Activated T-helper 2 cell treated with anti-CD3 and anti-CD28 coated beads, Interferon-gamma antibody, Interleukin-2, Interleukin-4, amounts not matched to agents 10 μg/mL and 5 μg/mL and 100 μg/mL, durations not matched to agents 14 hours and 24 hours and 36 hours (primary cell): ENCODE measurements at regions of chr19 and their contacts with region 1.

Region 1: GRCh38 chr19:50329146-50329925 is at the start of gene KCNC3:
- DNase-seq: peak; percentile 97
- H3K4me3 Mint-ChIP-seq: peak within 1 kb of the TSS; percentile 91
- H3K27ac Mint-ChIP-seq: peak within 1 kb of the TSS; percentile 95
- H3K4me1 Mint-ChIP-seq: peaks cover 59% of the 10 kb centered on the region
- H3K27me3 Mint-ChIP-seq: peaks cover 15% of the 10 kb centered on the region
- total RNA-seq, gene KCNC3: 17.6 and 19.2 TPM in 2 replicates

Region 2: GRCh38 chr19:49929611-49930482 is 399.5 kb before region 1 on chr19:
- intact Hi-C with region 1: loop called (anchors 2 kb)
- DNase-seq: peak; percentile 92
- H3K4me3 Mint-ChIP-seq: peak overlapping the region; percentile 98
- H3K27ac Mint-ChIP-seq: peak overlapping the region; percentile 98
- H3K4me1 Mint-ChIP-seq: peaks cover 36% of the 10 kb centered on the region
- H3K27me3 Mint-ChIP-seq: no peaks in the 10 kb centered on the region

Region 3: DNA sequence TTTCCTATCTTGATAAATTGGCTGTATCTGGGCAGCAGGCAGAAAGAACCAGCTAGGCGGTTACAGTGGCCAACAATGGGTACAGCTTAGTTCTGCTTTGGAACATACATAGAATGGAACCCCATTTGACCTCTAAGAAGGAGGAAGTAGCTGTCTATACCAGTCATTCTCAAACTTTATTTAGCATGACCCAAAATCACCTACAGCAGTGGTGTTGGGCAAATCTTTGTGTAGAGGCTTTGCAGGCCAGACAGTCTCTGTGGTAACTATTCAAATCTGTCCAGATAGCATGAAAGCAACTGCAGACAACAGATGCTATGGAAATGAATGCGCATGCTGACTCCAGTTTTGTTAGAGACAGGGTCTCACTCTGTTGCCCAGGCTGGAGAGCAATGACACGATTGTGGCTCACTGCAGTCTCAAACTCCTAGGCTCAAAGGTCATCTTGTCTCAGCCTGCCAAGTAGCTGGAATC is 11.8 kb after region 1 on chr19:
- intact Hi-C with region 1: loop called (anchors 2 kb)
- DNase-seq: no peak
- H3K4me3 Mint-ChIP-seq: no peak overlapping the region
- H3K27ac Mint-ChIP-seq: no peak overlapping the region
- H3K4me1 Mint-ChIP-seq: peaks cover 8% of the 10 kb centered on the region
- H3K27me3 Mint-ChIP-seq: no peaks in the 10 kb centered on the region

Region 4: DNA sequence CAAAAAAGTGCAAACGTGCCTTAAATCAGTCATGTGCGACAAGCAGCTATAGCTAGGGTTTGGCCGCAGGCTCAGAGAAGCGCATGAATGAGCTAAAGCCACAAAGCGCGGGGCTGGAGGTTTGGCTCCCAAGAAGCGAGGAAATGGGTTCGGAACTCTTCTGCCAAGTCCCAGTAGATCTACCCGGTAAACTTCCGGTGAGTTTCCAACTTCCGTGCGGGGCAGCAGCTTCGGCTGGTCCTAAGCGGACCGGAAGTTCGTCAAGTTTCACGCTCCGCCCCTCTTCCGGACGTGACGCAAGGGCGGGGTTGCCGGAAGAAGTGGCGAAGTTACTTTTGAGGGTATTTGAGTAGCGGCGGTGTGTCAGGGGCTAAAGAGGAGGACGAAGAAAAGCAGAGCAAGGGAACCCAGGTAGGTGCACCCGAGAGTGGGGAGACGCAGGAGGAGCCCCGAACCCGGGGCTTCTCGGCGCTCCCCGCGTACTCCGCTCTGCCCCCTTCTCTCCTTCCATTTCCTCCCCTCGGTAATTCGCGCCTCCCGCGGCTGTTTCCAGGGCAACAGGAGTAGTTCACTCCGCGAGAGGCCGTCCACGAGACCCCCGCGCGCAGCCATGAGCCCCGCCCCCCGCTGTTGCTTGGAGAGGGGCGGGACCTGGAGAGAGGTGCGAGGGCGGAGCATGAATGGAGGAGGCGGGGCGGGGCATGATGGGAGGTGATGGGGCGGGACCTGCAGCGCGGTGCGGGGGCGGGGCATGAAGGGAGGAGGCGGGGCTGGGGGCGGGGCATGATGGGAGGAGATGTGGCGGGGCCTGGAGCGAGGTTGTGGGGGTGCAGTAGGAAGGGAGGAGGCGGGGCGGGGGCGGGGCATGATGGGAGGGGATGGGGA is 47.1 kb after region 1 on chr19 and contains the start of gene NR1H2:
- intact Hi-C with region 1: loop called (anchors 5 kb)
- DNase-seq: peak; percentile 91
- H3K4me3 Mint-ChIP-seq: peak within 1 kb of the TSS; percentile 92
- H3K27ac Mint-ChIP-seq: peak within 1 kb of the TSS; percentile 97
- H3K4me1 Mint-ChIP-seq: peaks cover 9% of the 10 kb centered on the region
- H3K27me3 Mint-ChIP-seq: no peaks in the 10 kb centered on the region
- total RNA-seq, gene NR1H2: 76.1 and 79.9 TPM in 2 replicates

Region 5: GRCh38 chr19:50387176-50387867 is 58.0 kb after region 1 on chr19:
- intact Hi-C with region 1: no loop called
- DNase-seq: no peak
- H3K4me3 Mint-ChIP-seq: peak overlapping the region; percentile 38
- H3K27ac Mint-ChIP-seq: no peak overlapping the region
- H3K4me1 Mint-ChIP-seq: peaks cover 27% of the 10 kb centered on the region
- H3K27me3 Mint-ChIP-seq: no peaks in the 10 kb centered on the region

Region 6: DNA sequence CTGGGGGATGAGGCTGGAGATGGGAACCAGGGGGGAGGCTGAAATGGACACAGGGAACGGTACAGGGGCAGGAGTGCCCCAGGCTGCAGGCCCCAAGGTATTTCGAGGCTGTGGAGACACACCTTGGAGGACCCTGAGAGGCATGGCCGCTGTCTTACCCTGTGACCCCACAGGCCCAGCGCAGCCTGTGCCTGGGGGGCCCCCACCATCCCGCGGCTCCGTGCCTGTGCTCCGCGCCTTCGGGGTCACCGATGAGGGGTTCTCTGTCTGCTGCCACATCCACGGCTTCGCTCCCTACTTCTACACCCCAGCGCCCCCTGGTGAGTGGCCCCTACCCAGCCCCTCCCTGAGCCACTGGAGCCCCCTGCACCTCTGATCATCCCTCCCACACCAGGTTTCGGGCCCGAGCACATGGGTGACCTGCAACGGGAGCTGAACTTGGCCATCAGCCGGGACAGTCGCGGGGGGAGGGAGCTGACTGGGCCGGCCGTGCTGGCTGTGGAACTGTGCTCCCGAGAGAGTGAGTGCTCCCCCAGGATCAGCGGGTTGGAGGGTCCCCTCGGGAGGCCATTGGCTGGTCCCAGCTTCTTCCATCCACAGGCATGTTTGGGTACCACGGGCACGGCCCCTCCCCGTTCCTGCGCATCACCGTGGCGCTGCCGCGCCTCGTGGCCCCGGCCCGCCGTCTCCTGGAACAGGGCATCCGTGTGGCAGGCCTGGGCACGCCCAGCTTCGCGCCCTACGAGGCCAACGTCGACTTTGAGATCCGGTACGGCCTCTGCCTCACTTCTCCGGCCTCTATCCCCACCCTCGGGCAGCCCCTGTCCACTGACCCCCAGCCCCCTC is 72.5 kb after region 1 on chr19:
- intact Hi-C with region 1: no loop called
- DNase-seq: no peak
- H3K4me3 Mint-ChIP-seq: no peak overlapping the region
- H3K27ac Mint-ChIP-seq: no peak overlapping the region
- H3K4me1 Mint-ChIP-seq: no peaks in the 10 kb centered on the region
- H3K27me3 Mint-ChIP-seq: no peaks in the 10 kb centered on the region